AG04449 (cell line): ENCODE measurements at regions of chr10 and their contacts with region 1.

Region 1: GRCh38 chr10:32346134-32346550 is 816 bp downstream of the EPC1 start:
- DNase-seq: peak; percentile 73
- H3K4me3 ChIP-seq: peak overlapping the region; percentile 94
- CTCF ChIP-seq: peak; percentile 90

Region 2: GRCh38 chr10:32256613-32257437 is 89.3 kb before region 1 on chr10:
- CTCF ChIA-PET with region 1: interaction called, 70 read pairs
- POLR2A ChIA-PET with region 1: no interaction called
- DNase-seq: no peak
- H3K4me3 ChIP-seq: no peak overlapping the region
- CTCF ChIP-seq: peak; percentile 78

Region 3: DNA sequence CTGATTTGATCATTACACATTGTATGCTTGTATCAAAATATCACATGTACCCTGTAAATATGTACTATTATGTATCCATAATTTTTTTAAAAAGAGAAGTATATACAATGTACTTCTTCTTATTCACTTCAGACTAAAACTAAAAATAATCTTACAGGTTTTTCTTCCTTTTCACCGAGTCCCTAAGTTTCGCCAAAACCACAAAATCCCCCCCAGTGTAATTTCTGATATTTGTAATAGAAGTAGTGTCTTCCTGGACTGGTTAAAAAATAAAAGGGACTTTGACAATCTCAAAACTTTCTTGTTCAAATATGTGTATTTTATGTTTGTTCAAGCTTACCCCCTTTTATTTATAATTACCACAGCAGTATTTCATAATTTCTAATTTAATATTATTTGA is 23.1 kb before region 1 on chr10:
- CTCF ChIA-PET with region 1: interaction called, 17 read pairs
- POLR2A ChIA-PET with region 1: no interaction called
- DNase-seq: no peak
- H3K4me3 ChIP-seq: no peak overlapping the region
- CTCF ChIP-seq: no peak

Region 4: DNA sequence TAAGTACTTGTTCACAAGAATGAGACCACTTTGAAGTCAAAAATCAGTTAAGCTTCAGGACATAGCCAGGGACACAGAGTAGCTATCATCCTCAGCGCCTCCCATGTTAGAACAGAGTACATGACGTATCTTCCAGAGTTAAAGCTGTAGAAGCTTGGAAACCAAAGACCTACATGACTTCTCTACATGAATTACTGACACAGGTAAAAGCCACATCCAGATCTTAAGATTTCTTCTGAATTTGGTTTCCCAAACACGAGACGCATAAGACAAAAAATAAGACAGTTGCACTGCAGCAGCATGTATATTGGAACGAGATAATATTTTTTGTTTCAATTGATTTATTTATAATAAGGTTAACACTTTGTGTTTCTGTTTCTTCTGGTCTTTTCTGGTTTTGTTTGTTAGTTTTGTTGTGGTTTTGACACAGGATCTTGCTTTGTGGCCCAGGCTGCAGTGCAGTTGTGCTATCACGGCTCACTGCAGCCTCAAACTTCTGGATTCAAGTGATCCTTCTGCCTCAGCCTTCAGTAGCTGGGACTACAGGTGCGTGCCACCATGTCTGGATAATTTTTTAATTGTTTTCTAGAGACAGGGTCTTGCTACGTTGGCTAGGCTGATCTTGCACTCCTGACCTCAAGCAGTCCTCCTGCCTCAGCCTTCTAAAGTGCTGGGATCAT is 11.1 kb after region 1 on chr10:
- CTCF ChIA-PET with region 1: interaction called, 11 read pairs
- POLR2A ChIA-PET with region 1: no interaction called
- DNase-seq: no peak
- H3K4me3 ChIP-seq: no peak overlapping the region
- CTCF ChIP-seq: no peak

Region 5: DNA sequence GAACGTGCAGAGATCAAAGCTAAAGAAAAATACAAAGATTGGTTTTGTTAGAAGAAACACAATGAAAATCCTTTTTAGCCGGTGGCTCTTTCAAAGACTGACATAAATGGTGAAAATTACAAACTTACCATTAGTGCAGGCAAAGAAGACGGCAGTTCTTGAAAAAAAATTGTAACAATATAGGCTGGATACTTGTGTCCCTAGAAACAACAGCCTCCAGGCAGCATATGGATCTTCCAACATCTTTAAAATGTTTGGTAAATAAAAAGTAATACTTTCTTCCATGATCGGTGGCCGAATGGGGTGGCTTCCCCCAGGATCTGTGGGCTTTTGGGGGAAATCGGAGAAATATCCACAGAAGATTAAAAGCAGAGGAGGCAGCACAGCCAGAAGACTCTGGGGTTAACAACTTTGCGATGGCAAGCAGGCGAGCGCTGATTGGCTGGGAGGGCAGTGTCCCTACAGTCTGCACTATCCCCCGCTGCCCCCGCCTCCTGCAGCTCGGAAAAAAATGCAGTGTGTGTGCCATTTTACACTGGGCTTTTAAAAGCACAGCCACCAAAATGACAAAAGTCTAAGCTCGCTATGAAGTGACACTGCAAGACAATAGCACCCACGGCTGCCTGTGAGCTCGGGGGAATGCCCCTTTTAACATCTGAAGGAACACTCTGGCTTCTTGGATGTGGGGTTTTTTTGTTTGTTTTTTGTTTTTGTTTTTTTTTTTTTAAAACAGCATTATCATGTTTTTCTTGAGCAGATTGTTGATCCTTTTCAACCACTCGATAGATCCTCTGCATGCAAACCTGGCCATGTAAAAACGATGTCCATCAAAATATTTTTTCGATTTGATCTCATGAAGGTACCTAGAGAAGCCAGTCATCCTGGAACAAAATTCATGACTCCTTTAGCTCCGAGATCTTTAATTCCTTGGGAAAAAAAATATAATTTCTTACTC is 32.5 kb after region 1 on chr10:
- CTCF ChIA-PET with region 1: interaction called, 17 read pairs
- POLR2A ChIA-PET with region 1: no interaction called
- DNase-seq: peak; percentile 41
- H3K4me3 ChIP-seq: peak overlapping the region; percentile 73
- CTCF ChIP-seq: no peak

Region 6: GRCh38 chr10:32489901-32490300 is 143.8 kb after region 1 on chr10:
- CTCF ChIA-PET with region 1: no interaction called
- POLR2A ChIA-PET with region 1: no interaction called
- DNase-seq: no peak
- H3K4me3 ChIP-seq: no peak overlapping the region
- CTCF ChIP-seq: no peak